Ovary (tissue), 10 donors: ENCODE measurements at regions of chr5 and their contacts with region 1.

Region 1: DNA sequence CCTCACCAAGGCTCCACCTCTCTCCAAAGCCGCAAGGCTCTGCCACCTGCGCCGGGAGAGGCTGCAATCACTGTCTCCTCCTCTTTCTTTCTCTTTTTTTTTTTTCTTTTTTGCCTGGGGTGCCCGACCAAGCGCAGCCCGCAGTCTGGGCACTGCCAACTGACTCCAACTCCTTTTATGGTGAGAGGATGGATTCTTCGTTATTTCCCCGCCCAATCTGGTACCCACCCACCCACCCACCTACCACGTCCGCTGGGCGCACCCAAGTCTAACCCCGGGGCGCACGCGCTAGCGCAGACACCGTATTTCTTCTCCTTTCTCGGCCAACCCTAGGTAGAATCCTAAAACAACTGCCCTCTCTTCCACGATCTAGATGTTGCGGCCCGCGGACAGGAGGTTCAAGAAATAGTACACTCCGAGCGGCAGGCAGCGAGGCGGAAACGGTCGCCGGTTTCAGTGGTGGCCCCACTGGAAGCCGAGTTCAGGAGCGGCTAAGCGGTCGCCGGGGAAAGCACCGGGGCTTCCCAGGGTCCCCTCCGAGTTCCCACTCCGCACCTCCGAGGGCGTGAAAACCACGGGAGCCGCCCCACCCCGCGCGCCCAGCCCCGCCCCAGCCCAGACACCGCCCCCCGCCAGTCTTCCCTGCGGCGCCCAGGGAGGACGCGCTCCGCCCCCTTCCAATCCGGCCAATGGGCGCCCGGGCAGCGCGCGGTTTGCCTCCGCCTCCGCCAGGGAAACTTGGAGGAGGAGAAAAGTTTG is 381 bp upstream of the PTGER4 start:
- DNase-seq: peak; percentile 66 to 84 (median 80)
- H3K4me3 ChIP-seq: peak overlapping the region; percentile 63
- H3K27ac ChIP-seq: peak overlapping the region in 1 of 2 donors; percentile 22
- H3K4me1 ChIP-seq: peaks cover 9% of the 10 kb centered on the region
- H3K27me3 ChIP-seq: no peaks in the 10 kb centered on the region
- CTCF ChIP-seq: no peak
- EP300 ChIP-seq: no peak
- POLR2A ChIP-seq: no peak

Region 2: GRCh38 chr5:39520232-39520572 is 1159.1 kb before region 1 on chr5:
- intact Hi-C with region 1: no loop called
- DNase-seq: no peak
- H3K4me3 ChIP-seq: no peak overlapping the region
- H3K27ac ChIP-seq: no peak overlapping the region
- H3K4me1 ChIP-seq: no peaks in the 10 kb centered on the region
- H3K27me3 ChIP-seq: no peaks in the 10 kb centered on the region
- CTCF ChIP-seq: no peak
- EP300 ChIP-seq: no peak
- POLR2A ChIP-seq: no peak

Region 3: DNA sequence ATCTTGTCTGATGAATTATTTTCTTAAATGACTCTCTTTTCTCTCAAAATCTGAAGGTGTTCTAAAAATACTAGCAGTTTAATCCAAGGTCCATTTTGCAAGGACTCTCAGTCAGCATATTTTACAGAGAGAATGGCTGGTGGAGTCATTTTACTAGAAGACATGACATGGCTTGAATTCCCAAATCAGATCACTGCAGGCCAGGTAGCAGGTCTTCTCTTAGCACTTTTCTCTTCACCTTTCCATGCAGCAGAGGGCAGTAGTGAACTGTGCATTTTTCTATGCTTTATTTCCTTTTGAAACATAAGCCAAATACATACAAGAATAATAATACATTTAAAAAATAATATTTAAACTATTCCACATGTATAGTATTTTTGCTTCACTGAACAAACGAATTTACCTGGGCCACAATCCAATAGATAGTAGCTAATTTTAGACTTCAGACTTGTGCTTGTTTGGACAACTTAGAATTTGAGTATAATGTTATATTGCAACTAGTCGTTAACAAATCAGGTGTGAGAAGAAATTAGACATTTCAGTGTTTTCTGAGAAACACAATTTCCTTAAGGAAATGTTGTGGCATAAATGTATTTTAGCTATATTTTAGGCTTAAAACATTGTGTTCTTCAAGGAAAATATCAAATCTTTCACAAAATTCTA is 965.2 kb before region 1 on chr5:
- intact Hi-C with region 1: loop called in 2 of 4 experiments (anchors 10 kb)
- DNase-seq: peak in 1 of 5 donors; percentile 20
- H3K4me3 ChIP-seq: no peak overlapping the region
- H3K27ac ChIP-seq: no peak overlapping the region
- H3K4me1 ChIP-seq: no peaks in the 10 kb centered on the region
- H3K27me3 ChIP-seq: no peaks in the 10 kb centered on the region
- CTCF ChIP-seq: peak in 1 of 3 donors; percentile 21
- EP300 ChIP-seq: no peak
- POLR2A ChIP-seq: no peak

Region 4: GRCh38 chr5:40355846-40356245 is 323.5 kb before region 1 on chr5:
- intact Hi-C with region 1: no loop called
- DNase-seq: no peak
- H3K4me3 ChIP-seq: no peak overlapping the region
- H3K27ac ChIP-seq: no peak overlapping the region
- H3K4me1 ChIP-seq: no peaks in the 10 kb centered on the region
- H3K27me3 ChIP-seq: no peaks in the 10 kb centered on the region
- CTCF ChIP-seq: no peak
- EP300 ChIP-seq: no peak
- POLR2A ChIP-seq: no peak

Region 5: GRCh38 chr5:41182666-41183065 is 503.3 kb after region 1 on chr5:
- intact Hi-C with region 1: no loop called
- DNase-seq: no peak
- H3K4me3 ChIP-seq: no peak overlapping the region
- H3K27ac ChIP-seq: no peak overlapping the region
- H3K4me1 ChIP-seq: peaks cover 15% of the 10 kb centered on the region
- H3K27me3 ChIP-seq: no peaks in the 10 kb centered on the region
- CTCF ChIP-seq: no peak
- EP300 ChIP-seq: no peak
- POLR2A ChIP-seq: no peak

Region 6: GRCh38 chr5:41610402-41610801 is 931.1 kb after region 1 on chr5:
- intact Hi-C with region 1: no loop called
- DNase-seq: no peak
- H3K4me3 ChIP-seq: no peak overlapping the region
- H3K27ac ChIP-seq: no peak overlapping the region
- H3K4me1 ChIP-seq: no peaks in the 10 kb centered on the region
- H3K27me3 ChIP-seq: no peaks in the 10 kb centered on the region
- CTCF ChIP-seq: no peak
- EP300 ChIP-seq: no peak
- POLR2A ChIP-seq: no peak